ENCODE measurements at regions of chr15 and their contacts with region 1.

Region 1: DNA sequence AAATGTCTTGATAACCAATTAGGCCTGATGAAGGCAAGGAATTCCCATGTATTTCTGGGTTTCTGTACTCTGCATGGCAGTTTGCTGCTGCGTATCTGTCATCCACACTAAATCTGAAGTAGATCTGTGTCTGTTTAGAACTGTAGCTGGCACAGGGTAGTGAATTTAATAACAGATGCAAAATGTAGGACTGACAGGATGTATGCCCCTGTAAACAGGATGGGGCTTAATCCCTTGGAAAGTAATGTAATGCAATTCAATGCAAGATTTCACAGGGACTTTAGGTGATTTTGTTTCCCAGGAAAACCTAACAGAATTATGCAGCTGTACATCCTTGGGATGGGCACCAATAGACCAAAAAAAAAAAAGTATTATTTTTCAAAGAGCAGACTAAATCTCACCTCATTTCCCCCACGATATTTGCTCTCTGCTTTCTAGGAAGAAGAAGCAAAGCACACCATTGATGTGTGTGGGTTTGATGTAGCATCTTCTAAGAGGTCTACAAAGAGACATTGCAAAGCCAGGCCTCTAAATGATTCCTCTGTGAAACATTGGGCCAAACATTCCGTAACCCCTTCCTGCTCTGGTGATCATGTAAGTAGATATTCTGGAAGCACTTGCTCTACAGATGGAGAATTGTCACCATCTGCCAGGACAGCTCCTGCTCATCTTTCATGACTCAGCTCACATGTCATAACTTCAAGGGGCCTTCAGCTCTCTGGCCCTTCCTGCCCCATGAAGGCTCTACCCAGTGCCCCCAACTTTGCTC is 464.3 kb upstream of the RGMA start:
- DNase-seq: no peak
- ATAC-seq: no peak
- H3K4me3 ChIP-seq: no peak overlapping the region
- H3K27ac ChIP-seq: no peak overlapping the region
- H3K4me1 ChIP-seq: no peaks in the 10 kb centered on the region
- H3K27me3 ChIP-seq: no peaks in the 10 kb centered on the region
- CTCF ChIP-seq: no peak

Region 2: DNA sequence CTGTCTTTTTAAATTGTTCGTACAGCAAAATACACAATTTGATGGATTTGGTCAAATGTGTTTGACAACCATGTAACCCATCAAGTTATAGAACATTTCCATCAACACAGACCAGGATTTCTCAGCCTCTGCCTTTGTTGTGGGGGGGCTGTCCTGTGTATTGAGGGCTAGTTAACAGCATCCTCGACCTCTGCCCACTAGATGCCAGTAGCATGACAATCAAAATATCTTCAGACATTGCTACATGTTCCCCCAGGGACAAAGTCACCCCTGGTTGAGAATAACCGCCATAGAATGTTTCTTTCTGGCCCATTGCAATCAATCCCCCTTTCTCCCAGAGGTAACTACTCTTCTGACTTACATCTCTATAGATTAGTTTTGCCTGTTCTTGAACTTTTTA is 154.2 kb before region 1 on chr15:
- CTCF ChIA-PET with region 1: no interaction called
- POLR2A ChIA-PET with region 1: no interaction called
- in situ Hi-C with region 1: no loop called
- intact Hi-C with region 1: no loop called
- DNase-seq: no peak
- ATAC-seq: no peak
- H3K4me3 ChIP-seq: no peak overlapping the region
- H3K27ac ChIP-seq: no peak overlapping the region
- H3K4me1 ChIP-seq: no peaks in the 10 kb centered on the region
- H3K27me3 ChIP-seq: no peaks in the 10 kb centered on the region; the same call in 1 of the 2 replicates
- CTCF ChIP-seq: no peak

Region 3: DNA sequence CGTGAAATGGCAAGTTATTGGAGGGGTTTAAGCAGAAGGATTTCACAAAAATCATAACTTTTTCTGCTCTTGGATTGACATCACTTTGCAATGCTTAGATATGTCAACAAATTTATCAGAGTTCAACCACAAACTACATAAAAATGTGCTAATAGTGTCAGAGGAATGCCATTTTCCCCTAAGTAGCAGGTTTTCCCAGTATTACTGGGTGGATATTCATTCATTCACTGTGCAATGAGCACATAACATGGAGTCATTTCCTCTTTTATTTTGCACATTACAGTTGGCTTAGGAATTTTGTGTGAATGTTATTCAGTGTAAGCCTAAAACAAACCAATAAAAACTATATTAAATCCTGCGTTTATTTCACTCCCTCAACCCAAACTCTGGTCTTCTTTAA is 140.7 kb after region 1 on chr15:
- CTCF ChIA-PET with region 1: interaction called, 16 read pairs
- POLR2A ChIA-PET with region 1: no interaction called
- in situ Hi-C with region 1: no loop called
- intact Hi-C with region 1: no loop called
- DNase-seq: no peak
- ATAC-seq: no peak
- H3K4me3 ChIP-seq: no peak overlapping the region
- H3K27ac ChIP-seq: no peak overlapping the region
- H3K4me1 ChIP-seq: no peaks in the 10 kb centered on the region
- H3K27me3 ChIP-seq: no peaks in the 10 kb centered on the region
- CTCF ChIP-seq: no peak